ENCODE measurements at regions of chr2 and their contacts with region 1.

Region 1: GRCh38 chr2:191544461-191545062 is 133.4 kb upstream of the NABP1 start:
- DNase-seq: no peak
- H3K4me3 ChIP-seq: no peak overlapping the region
- H3K27ac ChIP-seq: no peak overlapping the region
- H3K4me1 ChIP-seq: peaks cover 0 to 4% (median under 1%) of the 10 kb centered on the region in 4 experiments; a peak in 3 of 7 replicates
- H3K27me3 ChIP-seq: no peaks in the 10 kb centered on the region
- CTCF ChIP-seq: no peak
- EP300 ChIP-seq: no peak
- POLR2A ChIP-seq: no peak
- RAD21 ChIP-seq: no peak

Region 2: DNA sequence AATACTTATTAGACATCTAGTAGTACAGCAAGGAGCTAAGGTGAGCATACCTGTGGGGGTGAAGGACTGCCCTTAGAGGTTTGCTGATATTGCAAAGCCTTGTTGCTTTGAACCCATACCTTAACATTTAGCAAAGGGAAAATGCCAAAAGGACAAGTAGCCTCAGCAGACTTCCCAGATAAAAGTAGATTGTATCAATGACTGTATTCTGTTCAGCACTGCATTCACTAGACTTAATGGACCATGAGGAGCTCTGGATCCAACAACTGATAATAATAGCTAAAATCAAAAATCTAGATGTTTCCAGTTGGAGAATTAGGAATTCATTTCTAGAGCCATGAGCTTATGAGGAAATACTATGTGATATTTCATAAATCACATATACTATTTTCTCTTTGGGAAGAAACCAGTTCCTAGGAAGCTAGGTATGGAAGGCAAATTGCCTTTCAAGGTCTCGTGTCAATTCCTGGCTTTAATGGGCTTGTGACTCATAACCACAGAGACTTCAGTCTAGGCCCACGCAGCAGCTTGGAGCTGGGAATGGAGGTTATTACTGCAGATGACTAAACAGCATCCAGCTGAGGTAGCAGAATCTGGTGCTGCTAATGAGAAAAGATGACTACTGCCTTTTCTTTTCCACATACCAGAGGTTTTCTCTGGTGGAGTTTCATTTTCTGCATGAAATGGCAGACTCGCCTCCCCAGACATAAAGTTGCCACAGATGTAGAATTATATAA is 57.8 kb before region 1 on chr2:
- CTCF ChIA-PET with region 1: no interaction called
- POLR2A ChIA-PET with region 1: no interaction called
- DNase-seq: no peak
- H3K4me3 ChIP-seq: no peak overlapping the region
- H3K27ac ChIP-seq: no peak overlapping the region
- H3K4me1 ChIP-seq: no peaks in the 10 kb centered on the region
- H3K27me3 ChIP-seq: no peaks in the 10 kb centered on the region
- CTCF ChIP-seq: no peak
- EP300 ChIP-seq: no peak
- POLR2A ChIP-seq: no peak
- RAD21 ChIP-seq: no peak

Region 3: DNA sequence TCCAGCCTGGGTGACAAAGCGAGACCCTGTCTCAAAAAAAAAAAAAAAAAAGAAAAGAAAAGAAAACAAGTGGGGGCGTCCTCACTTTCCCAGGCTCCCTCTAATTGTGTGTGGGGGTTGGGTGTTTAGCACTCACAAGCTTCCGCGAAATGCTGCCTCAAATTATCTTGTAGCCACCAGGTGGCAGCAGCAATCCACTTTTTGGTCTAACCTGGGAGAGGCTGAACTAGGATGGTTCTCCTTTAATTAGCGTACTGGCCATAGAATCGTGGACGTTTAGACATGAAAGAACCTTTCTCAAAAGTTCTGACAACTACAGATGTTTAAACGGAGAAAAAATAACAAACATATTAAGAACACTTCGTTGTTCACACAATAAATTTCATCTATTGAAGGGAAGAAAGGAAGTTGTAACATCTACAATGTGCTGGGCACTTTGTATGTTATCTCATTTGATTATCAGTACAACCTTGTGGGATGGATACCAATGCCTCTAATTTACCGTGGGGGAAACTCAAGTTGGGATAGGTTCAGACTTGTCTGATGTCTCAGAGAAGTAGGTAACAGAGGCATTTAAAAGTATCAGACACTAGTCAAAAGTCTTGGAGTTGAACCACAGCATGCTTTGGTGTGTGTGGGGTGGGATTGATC is 10.7 kb after region 1 on chr2:
- CTCF ChIA-PET with region 1: interaction called, 91 read pairs
- POLR2A ChIA-PET with region 1: no interaction called
- DNase-seq: peak; percentile 44 to 91
- H3K4me3 ChIP-seq: no peak overlapping the region
- H3K27ac ChIP-seq: no peak overlapping the region
- H3K4me1 ChIP-seq: no peaks in the 10 kb centered on the region
- H3K27me3 ChIP-seq: no peaks in the 10 kb centered on the region
- CTCF ChIP-seq: peak; percentile 61 to 78 (median 78)
- EP300 ChIP-seq: no peak
- POLR2A ChIP-seq: no peak
- RAD21 ChIP-seq: peak; percentile 88 to 90

Region 4: DNA sequence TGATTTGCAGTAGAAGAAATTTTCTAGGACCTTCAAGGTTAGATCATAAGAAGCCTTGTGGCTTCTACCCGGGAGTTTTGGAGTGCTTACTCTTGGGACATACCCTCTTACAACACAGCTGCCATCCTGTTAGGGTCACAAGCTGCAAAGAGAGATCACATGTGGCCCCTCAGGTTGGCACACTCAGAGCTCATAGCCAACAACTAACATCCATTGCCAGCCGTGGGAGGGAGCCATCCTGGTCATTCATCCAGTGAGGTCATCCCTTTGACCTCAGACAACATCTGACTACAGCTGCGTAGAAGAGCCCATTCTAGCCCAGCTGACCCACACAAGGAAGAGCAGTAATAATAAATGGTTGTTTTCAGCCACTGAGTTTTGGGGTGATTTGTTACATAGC is 56.5 kb after region 1 on chr2:
- CTCF ChIA-PET with region 1: no interaction called
- POLR2A ChIA-PET with region 1: no interaction called
- DNase-seq: no peak
- H3K4me3 ChIP-seq: no peak overlapping the region
- H3K27ac ChIP-seq: no peak overlapping the region
- H3K4me1 ChIP-seq: no peaks in the 10 kb centered on the region
- H3K27me3 ChIP-seq: no peaks in the 10 kb centered on the region
- CTCF ChIP-seq: no peak
- EP300 ChIP-seq: no peak
- POLR2A ChIP-seq: no peak
- RAD21 ChIP-seq: no peak